Activated B cell treated with CpG ODN at 0.5 μM for 24 hours (primary cell): ENCODE measurements at regions of chr6 and their contacts with region 1.

Region 1: DNA sequence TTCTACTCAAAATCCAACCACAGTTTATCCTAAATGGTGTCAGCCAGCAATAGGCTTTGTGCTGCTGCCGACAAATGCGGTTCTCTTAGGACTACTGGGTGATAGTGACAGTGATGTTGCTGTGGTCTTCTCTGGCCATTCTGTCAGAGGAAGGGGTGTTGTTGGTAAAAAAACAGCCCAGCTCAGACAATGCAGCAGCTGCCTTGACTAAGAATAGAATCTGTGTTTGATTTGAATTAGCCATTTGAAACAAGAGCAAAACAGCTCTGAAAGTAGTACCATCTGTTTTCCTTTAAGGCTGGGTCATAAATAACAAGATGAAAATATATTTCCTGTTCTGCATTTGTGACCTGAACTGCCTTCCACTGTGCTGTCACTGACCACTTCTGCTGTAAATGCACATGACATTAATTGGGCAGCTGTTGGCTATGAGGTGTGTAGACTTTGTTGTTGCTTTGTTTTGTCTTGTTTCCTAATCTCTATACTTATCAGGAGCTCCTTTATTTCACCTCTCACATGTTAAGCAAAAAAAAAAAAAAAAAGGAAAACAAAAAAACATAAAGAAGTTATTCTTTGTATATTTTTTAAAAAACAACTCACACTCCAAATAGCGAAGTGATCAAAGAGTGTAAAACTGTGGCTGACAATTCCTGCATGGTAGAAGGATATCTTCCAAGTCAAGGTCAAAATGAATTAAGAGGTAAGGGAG is 497.8 kb upstream of the ARID1B start:
- DNase-seq: no peak
- ATAC-seq: peak; percentile 51
- H3K4me3 Mint-ChIP-seq: peak overlapping the region; percentile 61
- H3K27ac Mint-ChIP-seq: peak overlapping the region; percentile 83
- H3K4me1 Mint-ChIP-seq: peaks cover 53% of the 10 kb centered on the region
- H3K27me3 Mint-ChIP-seq: no peaks in the 10 kb centered on the region
- CTCF ChIP-seq: no peak

Region 2: GRCh38 chr6:156167625-156168071 is 111.8 kb before region 1 on chr6:
- CTCF ChIA-PET with region 1: no interaction called
- POLR2A ChIA-PET with region 1: no interaction called
- intact Hi-C with region 1: loop called (anchors 10 kb)
- DNase-seq: no peak
- ATAC-seq: no peak
- H3K4me3 Mint-ChIP-seq: peak overlapping the region; percentile 49
- H3K27ac Mint-ChIP-seq: peak overlapping the region; percentile 11
- H3K4me1 Mint-ChIP-seq: peaks cover 45% of the 10 kb centered on the region
- H3K27me3 Mint-ChIP-seq: no peaks in the 10 kb centered on the region
- CTCF ChIP-seq: no peak

Region 3: DNA sequence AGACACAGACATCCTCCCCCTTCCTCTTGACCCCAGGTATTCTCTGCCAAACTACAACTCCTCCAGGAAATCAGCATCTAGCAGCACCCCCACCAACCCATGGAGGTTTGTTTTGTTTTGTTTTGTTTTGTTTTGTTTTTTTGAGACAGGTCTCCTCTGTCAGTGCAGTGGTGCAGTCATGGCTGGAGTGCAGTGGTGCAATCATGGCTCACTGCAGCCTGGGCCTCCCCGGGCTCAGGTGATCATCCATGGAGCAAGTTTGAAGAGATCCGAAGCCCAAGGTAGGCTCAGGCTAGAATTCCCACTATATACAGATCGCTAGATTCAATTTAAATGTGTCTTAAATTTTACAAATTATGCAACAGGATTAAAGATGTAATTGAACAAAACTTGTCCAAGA is 20.4 kb before region 1 on chr6:
- CTCF ChIA-PET with region 1: no interaction called
- POLR2A ChIA-PET with region 1: no interaction called
- intact Hi-C with region 1: loop called (anchors 2 kb)
- DNase-seq: no peak
- ATAC-seq: no peak
- H3K4me3 Mint-ChIP-seq: no peak overlapping the region
- H3K27ac Mint-ChIP-seq: no peak overlapping the region
- H3K4me1 Mint-ChIP-seq: peaks cover 9% of the 10 kb centered on the region
- H3K27me3 Mint-ChIP-seq: no peaks in the 10 kb centered on the region
- CTCF ChIP-seq: no peak

Region 4: GRCh38 chr6:156396068-156396771 is 116.8 kb after region 1 on chr6:
- CTCF ChIA-PET with region 1: no interaction called
- POLR2A ChIA-PET with region 1: no interaction called
- intact Hi-C with region 1: loop called (anchors 5 kb)
- DNase-seq: no peak
- ATAC-seq: peak; percentile 62
- H3K4me3 Mint-ChIP-seq: peak overlapping the region; percentile 68
- H3K27ac Mint-ChIP-seq: peak overlapping the region; percentile 84
- H3K4me1 Mint-ChIP-seq: peaks cover 76% of the 10 kb centered on the region
- H3K27me3 Mint-ChIP-seq: no peaks in the 10 kb centered on the region
- CTCF ChIP-seq: no peak